CD8-positive, alpha-beta memory T cell (primary cell): ENCODE measurements at regions of chr7 and their contacts with region 1.

Region 1: GRCh38 chr7:44606450-44607254 is at the start of gene OGDH:
- DNase-seq: peak; percentile 98 to 100 (median 99)
- H3K4me3 ChIP-seq: peak within 1 kb of the TSS; percentile 75
- H3K4me3 Mint-ChIP-seq: peak within 1 kb of the TSS; percentile 93 to 99 (median 97)
- H3K27ac ChIP-seq: peak within 1 kb of the TSS; percentile 97
- H3K27ac Mint-ChIP-seq: peak within 1 kb of the TSS; percentile 97 to 100 (median 99)
- H3K4me1 ChIP-seq: peaks cover 23% of the 10 kb centered on the region
- H3K4me1 Mint-ChIP-seq: peaks cover 38 to 56% (median 45%) of the 10 kb centered on the region in 3 donors
- H3K27me3 ChIP-seq: no peaks in the 10 kb centered on the region
- H3K27me3 Mint-ChIP-seq: peaks cover 0 to 5% of the 10 kb centered on the region in 2 donors
- total RNA-seq, gene OGDH: 92.8 to 93.8 TPM

Region 2: DNA sequence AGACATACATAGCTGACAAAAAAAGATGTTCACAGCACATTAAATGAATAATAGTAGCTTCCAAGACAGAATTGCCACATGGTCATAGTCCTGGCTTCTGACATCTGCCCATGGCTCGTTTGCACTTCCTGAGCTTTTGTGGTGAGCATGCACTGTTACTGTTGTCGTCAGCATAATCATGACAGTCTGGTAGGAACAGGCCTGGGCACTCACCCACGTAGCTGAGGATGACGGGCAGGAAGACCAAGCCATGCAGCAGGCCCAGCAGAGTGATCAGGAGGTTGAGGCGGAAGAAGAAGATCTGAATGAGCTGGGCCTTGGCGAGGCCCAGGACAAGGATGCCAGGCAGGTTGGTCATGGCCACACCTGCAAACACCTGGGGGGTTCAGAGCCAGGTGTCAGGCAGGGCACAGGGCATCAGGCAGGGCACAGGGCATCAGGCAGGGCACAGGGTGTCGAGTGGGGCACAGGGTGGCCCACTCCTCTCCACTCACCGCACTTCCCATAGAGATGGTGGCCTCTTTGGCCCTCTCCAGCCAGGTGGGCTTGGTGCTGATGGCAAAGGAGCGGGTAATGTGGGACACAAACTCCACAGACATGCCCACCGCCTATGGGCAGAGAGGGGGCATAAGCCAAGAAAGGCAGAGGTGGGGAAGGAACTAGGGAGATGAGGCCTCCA is 90.9 kb before region 1 on chr7:
- CTCF ChIA-PET with region 1: no interaction called
- POLR2A ChIA-PET with region 1: no interaction called
- DNase-seq: no peak
- H3K4me3 ChIP-seq: no peak overlapping the region
- H3K4me3 Mint-ChIP-seq: no peak overlapping the region
- H3K27ac ChIP-seq: no peak overlapping the region
- H3K27ac Mint-ChIP-seq: no peak overlapping the region
- H3K4me1 ChIP-seq: no peaks in the 10 kb centered on the region
- H3K4me1 Mint-ChIP-seq: no peaks in the 10 kb centered on the region
- H3K27me3 ChIP-seq: no peaks in the 10 kb centered on the region
- H3K27me3 Mint-ChIP-seq: peaks cover 5 to 15% of the 10 kb centered on the region in 2 donors

Region 3: DNA sequence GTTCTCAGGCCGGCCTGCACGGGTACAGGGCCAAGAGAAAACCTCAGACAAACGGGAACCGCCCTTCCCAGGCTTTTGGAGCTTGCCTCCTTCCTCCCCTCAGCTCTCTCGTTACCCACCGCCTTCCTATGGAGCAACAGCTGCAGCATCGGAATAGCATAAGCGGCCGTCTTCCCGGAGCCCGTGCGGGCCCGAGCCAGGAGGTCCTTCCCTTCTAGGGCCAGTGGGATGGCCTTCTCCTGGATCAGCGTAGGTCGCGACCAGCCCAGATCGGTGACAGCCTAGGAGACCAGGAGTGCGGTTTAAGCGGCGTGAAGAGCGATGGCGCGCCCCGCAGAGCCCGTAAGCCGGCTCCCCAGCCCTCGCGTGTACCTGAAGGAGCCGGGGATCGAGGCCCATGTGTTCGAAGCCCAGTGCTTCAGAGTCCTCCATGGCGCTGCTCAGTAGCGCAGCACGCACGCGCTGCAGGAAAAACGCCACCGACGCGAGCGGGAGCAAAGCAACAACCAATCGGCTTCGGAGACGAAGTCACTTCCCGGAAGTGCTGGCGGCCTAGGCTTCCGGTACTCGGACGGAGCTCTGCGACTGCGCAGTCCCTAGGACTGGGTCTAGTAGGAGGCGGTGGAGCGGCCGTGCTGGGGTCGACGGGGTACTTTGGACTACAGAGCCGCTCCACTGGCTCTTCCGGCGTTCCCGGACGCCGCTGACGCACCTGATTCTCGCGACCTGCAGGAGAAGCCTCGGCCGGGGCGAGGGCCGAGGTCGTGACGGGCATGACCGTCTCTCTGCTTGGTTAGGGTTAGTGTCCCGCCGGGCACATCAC is 33.0 kb before region 1 on chr7 and contains the start of gene DDX56:
- CTCF ChIA-PET with region 1: no interaction called
- POLR2A ChIA-PET with region 1: interaction called, 15 read pairs
- DNase-seq: peak; percentile 86 to 95 (median 89)
- H3K4me3 ChIP-seq: peak within 1 kb of the TSS; percentile 87
- H3K4me3 Mint-ChIP-seq: peak within 1 kb of the TSS; percentile 92 to 98 (median 96)
- H3K27ac ChIP-seq: peak within 1 kb of the TSS; percentile 93
- H3K27ac Mint-ChIP-seq: peak within 1 kb of the TSS; percentile 95 to 99 (median 99)
- H3K4me1 ChIP-seq: peaks cover 25% of the 10 kb centered on the region
- H3K4me1 Mint-ChIP-seq: peaks cover 39 to 53% (median 43%) of the 10 kb centered on the region in 3 donors
- H3K27me3 ChIP-seq: no peaks in the 10 kb centered on the region
- H3K27me3 Mint-ChIP-seq: no peaks in the 10 kb centered on the region
- total RNA-seq, gene DDX56: 148 to 158 TPM

Region 4: DNA sequence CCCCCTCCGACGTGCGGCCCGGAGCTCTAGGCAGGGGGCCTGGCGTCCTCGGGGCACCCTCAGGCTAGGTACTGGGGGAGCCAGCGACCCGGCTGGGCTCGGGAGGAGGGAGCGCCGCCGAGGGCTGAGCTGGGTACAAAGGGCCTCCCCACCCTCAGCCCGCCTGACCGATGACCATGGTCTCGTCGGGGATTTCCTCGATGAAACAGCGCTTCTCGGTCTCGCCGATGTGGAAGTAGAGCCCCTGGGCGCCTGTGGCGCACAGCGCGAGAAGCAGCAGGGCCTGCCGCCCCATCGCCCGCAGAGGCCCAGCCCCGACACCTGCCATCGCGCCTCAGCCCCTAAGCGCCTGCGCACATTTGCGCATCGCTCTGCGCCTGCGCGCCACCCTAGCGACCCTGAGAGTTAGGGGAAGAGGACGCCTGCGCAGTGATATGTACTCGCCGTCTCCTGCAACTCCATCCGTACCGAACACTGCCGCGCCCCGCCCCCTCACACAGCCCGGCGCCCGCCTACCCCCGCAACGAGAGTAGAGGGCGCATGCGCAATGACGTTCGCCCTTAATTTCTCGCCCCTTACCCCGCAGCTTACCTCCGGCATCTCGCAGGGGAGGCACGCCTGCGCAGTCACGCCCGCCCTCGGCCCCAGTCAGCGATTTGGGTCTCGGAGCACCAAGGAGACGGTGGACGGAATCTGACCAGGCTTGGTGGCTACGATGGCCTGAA is 24.6 kb before region 1 on chr7 and contains the start of gene TMED4:
- CTCF ChIA-PET with region 1: interaction called, 9 read pairs
- POLR2A ChIA-PET with region 1: interaction called, 19 read pairs
- DNase-seq: peak; percentile 100
- H3K4me3 ChIP-seq: peak within 1 kb of the TSS; percentile 96
- H3K4me3 Mint-ChIP-seq: peak within 1 kb of the TSS; percentile 86 to 96 (median 90)
- H3K27ac ChIP-seq: peak within 1 kb of the TSS; percentile 99
- H3K27ac Mint-ChIP-seq: peak within 1 kb of the TSS; percentile 96 to 98 (median 97)
- H3K4me1 ChIP-seq: peaks cover 21% of the 10 kb centered on the region
- H3K4me1 Mint-ChIP-seq: peaks cover 19 to 49% (median 35%) of the 10 kb centered on the region in 3 donors
- H3K27me3 ChIP-seq: no peaks in the 10 kb centered on the region
- H3K27me3 Mint-ChIP-seq: peaks cover 0 to 3% of the 10 kb centered on the region in 2 donors
- total RNA-seq, gene TMED4: 78.8 to 80.5 TPM

Region 5: DNA sequence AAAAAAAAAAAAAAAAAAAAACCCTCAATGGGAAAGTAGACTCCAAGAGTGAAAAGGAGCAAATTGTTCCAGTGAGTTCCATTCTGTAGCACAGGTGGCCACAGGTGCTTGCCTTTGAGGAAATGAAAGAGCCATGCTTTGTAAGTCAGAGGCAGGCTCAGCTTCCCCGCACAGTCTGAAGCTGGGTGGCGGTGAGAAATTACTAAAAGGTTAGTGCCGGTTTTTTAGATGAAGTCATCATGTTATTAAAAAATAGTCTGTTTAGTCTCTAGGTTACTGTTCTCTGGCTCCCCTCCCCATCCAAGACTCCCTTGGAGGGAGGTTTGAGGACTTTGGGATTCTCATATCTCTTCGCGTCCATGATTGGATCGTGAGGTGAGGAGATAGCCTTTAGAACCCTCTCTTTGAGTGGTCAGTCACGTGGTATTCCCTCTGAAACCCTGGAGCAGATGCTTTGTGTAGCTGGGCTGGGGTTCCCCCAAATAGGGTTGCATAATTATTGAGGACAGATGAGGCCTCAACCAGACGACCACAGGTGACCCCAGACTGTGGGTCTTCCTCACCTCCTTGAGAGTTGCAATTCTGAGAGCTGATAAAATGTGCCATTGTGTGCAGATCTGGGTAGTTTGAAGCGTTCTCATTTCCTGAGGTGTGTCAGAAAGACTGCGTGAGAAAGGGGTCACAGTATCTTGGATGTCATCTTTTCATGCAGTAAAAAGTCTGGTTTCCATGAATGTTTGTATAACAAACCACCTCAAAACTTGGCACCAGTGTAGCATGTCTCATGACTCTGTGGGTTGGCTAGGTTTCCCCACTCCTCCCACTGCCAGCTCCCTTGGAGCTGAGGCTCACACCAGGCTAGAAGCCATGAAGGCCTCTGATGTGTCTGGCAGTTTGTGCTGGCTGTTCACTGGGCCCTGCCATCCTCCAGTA is 26.9 kb after region 1 on chr7:
- CTCF ChIA-PET with region 1: interaction called, 26 read pairs
- POLR2A ChIA-PET with region 1: interaction called, 126 read pairs
- DNase-seq: peak; percentile 21 to 84 (median 66)
- H3K4me3 ChIP-seq: no peak overlapping the region
- H3K4me3 Mint-ChIP-seq: peak overlapping the region; percentile 41 to 87 (median 76)
- H3K27ac ChIP-seq: peak overlapping the region; percentile 87
- H3K27ac Mint-ChIP-seq: peak overlapping the region; percentile 90 to 100 (median 100)
- H3K4me1 ChIP-seq: peaks cover 91% of the 10 kb centered on the region
- H3K4me1 Mint-ChIP-seq: peaks cover 90 to 99% (median 98%) of the 10 kb centered on the region in 3 donors
- H3K27me3 ChIP-seq: no peaks in the 10 kb centered on the region
- H3K27me3 Mint-ChIP-seq: no peaks in the 10 kb centered on the region

Region 6: GRCh38 chr7:44638611-44639557 is 32.2 kb after region 1 on chr7:
- CTCF ChIA-PET with region 1: interaction called, 26 read pairs
- POLR2A ChIA-PET with region 1: interaction called, 126 read pairs
- DNase-seq: peak; percentile 46 to 91 (median 76)
- H3K4me3 ChIP-seq: peak overlapping the region; percentile 24
- H3K4me3 Mint-ChIP-seq: peak overlapping the region; percentile 51 to 94 (median 87)
- H3K27ac ChIP-seq: peak overlapping the region; percentile 90
- H3K27ac Mint-ChIP-seq: peak overlapping the region; percentile 94 to 100 (median 100)
- H3K4me1 ChIP-seq: peaks cover 80% of the 10 kb centered on the region
- H3K4me1 Mint-ChIP-seq: peaks cover 80 to 90% (median 87%) of the 10 kb centered on the region in 3 donors
- H3K27me3 ChIP-seq: no peaks in the 10 kb centered on the region
- H3K27me3 Mint-ChIP-seq: peaks cover 0 to 2% of the 10 kb centered on the region in 2 donors

Region 7: DNA sequence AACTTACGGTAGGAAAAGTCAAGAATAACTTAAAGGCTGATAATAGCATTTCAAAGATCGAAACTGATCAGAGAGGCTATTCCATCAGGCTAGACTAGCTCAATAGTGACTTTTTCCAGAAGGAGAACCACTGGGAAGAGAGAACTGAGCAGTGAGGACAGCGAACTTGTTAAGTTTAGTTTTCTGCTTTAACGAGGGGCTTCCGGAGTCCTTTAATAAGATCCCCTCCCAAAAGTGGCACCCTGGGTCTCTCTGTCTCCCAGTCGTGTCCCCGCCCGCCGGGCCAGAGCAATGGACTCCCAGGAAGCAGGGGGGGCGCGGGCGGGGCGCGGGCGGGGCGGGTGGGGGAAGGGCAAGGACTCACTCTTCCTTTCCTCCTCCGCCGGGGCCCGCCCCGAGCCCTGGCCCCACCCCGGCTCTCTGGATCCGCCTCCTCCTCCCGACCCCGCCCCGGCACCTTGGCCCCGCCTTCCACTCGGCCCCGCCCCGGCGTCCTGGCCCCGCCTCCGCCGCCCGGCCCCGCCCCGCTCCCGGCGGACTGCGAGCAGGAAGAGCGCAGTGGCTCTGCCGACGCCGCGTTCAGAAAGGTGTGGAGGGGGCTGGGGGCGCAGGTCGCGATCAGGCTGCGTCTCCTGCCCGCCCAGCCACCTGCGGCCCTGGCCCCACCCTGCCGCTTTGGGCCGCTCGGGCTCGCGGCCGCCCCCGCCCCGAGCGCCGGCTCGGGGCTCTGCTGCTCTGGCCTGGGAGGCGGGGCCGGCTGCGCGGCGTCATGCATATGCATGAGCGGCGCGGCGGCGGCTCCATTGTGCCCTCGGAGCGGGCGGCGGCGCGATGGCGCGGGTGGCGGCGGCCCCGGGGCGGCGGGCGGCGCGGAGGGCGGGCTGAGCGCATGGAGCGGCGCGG is 141.6 kb after region 1 on chr7 and contains the start of gene ZMIZ2:
- CTCF ChIA-PET with region 1: interaction called, 4 read pairs
- POLR2A ChIA-PET with region 1: interaction called, 14 read pairs
- DNase-seq: peak; percentile 86 to 93 (median 90)
- H3K4me3 ChIP-seq: peak within 1 kb of the TSS; percentile 54
- H3K4me3 Mint-ChIP-seq: peak within 1 kb of the TSS; percentile 79 to 90 (median 87)
- H3K27ac ChIP-seq: peak within 1 kb of the TSS; percentile 76
- H3K27ac Mint-ChIP-seq: peak within 1 kb of the TSS; percentile 87 to 97 (median 94)
- H3K4me1 ChIP-seq: peaks cover 38% of the 10 kb centered on the region
- H3K4me1 Mint-ChIP-seq: peaks cover 31 to 48% (median 44%) of the 10 kb centered on the region in 3 donors
- H3K27me3 ChIP-seq: no peaks in the 10 kb centered on the region
- H3K27me3 Mint-ChIP-seq: no peaks in the 10 kb centered on the region
- total RNA-seq, gene ZMIZ2: 119 to 122 TPM

Region 8: GRCh38 chr7:44847508-44847920 is 240.9 kb after region 1 on chr7:
- CTCF ChIA-PET with region 1: interaction called, 4 read pairs
- POLR2A ChIA-PET with region 1: interaction called, 26 read pairs
- DNase-seq: peak; percentile 74 to 93 (median 91)
- H3K4me3 ChIP-seq: peak overlapping the region; percentile 86
- H3K4me3 Mint-ChIP-seq: peak overlapping the region; percentile 89 to 97 (median 96)
- H3K27ac ChIP-seq: peak overlapping the region; percentile 97
- H3K27ac Mint-ChIP-seq: peak overlapping the region; percentile 97 to 100 (median 99)
- H3K4me1 ChIP-seq: peaks cover 31% of the 10 kb centered on the region
- H3K4me1 Mint-ChIP-seq: peaks cover 35 to 38% (median 37%) of the 10 kb centered on the region in 3 donors
- H3K27me3 ChIP-seq: no peaks in the 10 kb centered on the region
- H3K27me3 Mint-ChIP-seq: peaks cover 0 to 11% of the 10 kb centered on the region in 2 donors